Panc1 (cell line): ENCODE measurements at regions of chrX and their contacts with region 1.

Region 1: GRCh38 chrX:112759512-112759911 is 79.8 kb upstream of the LHFPL1 start:
- DNase-seq: no peak
- ATAC-seq: no peak
- H3K4me3 ChIP-seq: no peak overlapping the region
- H3K27ac ChIP-seq: no peak overlapping the region
- H3K4me1 ChIP-seq: no peaks in the 10 kb centered on the region
- H3K27me3 ChIP-seq: no peaks in the 10 kb centered on the region; the same call in 1 of the 2 replicates
- CTCF ChIP-seq: no peak

Region 2: GRCh38 chrX:112784692-112785091 is 25.2 kb after region 1 on chrX:
- CTCF ChIA-PET with region 1: no interaction called
- POLR2A ChIA-PET with region 1: interaction called, 18 read pairs
- in situ Hi-C with region 1: no loop called
- intact Hi-C with region 1: no loop called
- DNase-seq: no peak
- ATAC-seq: no peak
- H3K4me3 ChIP-seq: no peak overlapping the region
- H3K27ac ChIP-seq: no peak overlapping the region
- H3K4me1 ChIP-seq: no peaks in the 10 kb centered on the region
- H3K27me3 ChIP-seq: no peaks in the 10 kb centered on the region
- CTCF ChIP-seq: no peak